ENCODE measurements at regions of chr18 and their contacts with region 1.

Region 1: DNA sequence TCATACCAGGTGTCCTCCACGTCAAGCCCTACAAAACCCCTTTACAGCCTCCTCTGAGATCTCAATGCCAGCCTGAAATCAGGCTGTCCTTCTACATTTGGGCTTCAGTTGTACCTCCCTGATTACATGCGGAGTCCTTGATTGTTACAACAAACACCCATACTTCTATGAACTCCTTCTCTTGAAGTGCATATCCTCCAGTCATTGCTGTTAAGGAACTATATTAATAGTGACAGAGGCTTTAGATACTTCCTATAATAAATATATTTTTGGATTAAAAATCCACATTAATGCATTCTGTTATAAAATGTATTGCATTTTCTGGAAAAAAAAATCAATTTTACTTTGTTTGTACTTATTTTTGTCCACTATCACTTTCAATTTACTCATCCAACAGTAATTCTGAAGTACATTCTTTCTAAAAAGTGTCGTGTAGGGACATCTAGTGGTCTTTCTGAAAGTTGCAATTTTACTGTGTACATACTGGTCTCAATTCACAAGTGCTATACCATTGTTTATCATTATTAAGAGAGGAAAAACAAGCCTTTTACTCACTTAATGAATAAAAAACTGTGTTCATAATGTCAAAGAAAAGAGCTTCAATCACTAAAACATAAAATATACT is 316.4 kb downstream of the DSEL start:
- DNase-seq: no peak
- H3K4me3 ChIP-seq: no peak overlapping the region
- H3K27ac ChIP-seq: no peak overlapping the region
- H3K4me1 ChIP-seq: no peaks in the 10 kb centered on the region
- H3K27me3 ChIP-seq: no peaks in the 10 kb centered on the region
- CTCF ChIP-seq: peak; percentile 60 to 80 (median 66)
- POLR2A ChIP-seq: no peak

Region 2: DNA sequence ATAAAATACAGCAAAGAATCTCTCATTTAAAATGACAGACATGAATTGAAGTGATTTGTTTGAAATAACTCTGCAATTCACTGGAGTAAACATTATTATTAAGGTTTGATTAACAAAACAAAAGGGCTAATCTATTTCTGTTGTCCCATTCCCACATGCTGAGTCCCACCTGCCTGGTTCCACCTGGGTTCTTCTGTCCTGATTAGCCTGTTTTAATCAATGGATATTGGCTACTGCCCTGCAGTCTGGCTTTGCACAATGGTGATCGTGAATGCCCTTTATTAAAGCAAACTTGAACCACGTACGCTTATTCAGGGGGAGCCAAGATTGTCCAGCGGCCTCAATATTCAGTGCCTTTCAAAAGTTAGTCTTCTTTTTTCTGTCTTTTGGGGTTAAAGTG is 523.4 kb before region 1 on chr18:
- intact Hi-C with region 1: no loop called
- DNase-seq: no peak
- H3K4me3 ChIP-seq: no peak overlapping the region
- H3K27ac ChIP-seq: no peak overlapping the region
- H3K4me1 ChIP-seq: no peaks in the 10 kb centered on the region
- H3K27me3 ChIP-seq: no peaks in the 10 kb centered on the region
- CTCF ChIP-seq: no peak
- POLR2A ChIP-seq: no peak

Region 3: GRCh38 chr18:67104700-67105284 is 95.3 kb before region 1 on chr18:
- intact Hi-C with region 1: loop called (anchors 5 kb)
- DNase-seq: peak; percentile 22 to 91 (median 68)
- H3K4me3 ChIP-seq: no peak overlapping the region
- H3K27ac ChIP-seq: no peak overlapping the region
- H3K4me1 ChIP-seq: no peaks in the 10 kb centered on the region
- H3K27me3 ChIP-seq: no peaks in the 10 kb centered on the region
- CTCF ChIP-seq: peak; percentile 58 to 78 (median 68)
- POLR2A ChIP-seq: no peak

Region 4: DNA sequence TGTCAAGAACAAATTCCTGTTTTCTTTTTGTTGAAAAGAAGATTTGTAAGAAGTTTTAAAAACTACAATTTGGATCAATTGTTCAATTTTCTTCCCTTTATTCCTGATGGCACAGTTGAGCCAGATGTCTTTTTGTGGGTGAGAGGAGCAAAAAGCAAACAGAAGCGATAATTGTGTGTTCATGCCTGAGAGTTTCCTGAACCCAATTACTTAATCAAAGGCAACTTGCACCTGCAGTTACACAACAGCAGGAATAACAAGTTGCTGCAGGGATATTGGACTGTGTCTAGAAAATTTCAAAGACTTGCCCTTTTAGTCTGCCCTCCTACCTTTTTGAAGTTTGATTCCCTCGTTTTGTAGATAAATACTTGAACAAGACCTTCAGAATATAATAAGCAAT is 67.2 kb before region 1 on chr18:
- intact Hi-C with region 1: no loop called
- DNase-seq: no peak
- H3K4me3 ChIP-seq: no peak overlapping the region
- H3K27ac ChIP-seq: no peak overlapping the region
- H3K4me1 ChIP-seq: no peaks in the 10 kb centered on the region
- H3K27me3 ChIP-seq: no peaks in the 10 kb centered on the region
- CTCF ChIP-seq: no peak
- POLR2A ChIP-seq: no peak